ENCODE measurements at regions of chr16 and their contacts with region 1.

Region 1: GRCh38 chr16:29926005-29926710 is at the start of gene KCTD13:
- DNase-seq: peak; percentile 91
- H3K4me3 ChIP-seq: peak within 1 kb of the TSS; percentile 66 to 99 (median 92)
- H3K27ac ChIP-seq: peak within 1 kb of the TSS; percentile 85 to 91 (median 86)
- H3K4me1 ChIP-seq: peaks cover 0 to 27% (median 22%) of the 10 kb centered on the region in 4 donors
- H3K27me3 ChIP-seq: no peaks in the 10 kb centered on the region
- CTCF ChIP-seq: no peak
- EP300 ChIP-seq: no peak
- POLR2A ChIP-seq: peak; percentile 81 to 94
- total RNA-seq, gene KCTD13: 9.8 to 20.5 (median 14.1) TPM

Region 2: DNA sequence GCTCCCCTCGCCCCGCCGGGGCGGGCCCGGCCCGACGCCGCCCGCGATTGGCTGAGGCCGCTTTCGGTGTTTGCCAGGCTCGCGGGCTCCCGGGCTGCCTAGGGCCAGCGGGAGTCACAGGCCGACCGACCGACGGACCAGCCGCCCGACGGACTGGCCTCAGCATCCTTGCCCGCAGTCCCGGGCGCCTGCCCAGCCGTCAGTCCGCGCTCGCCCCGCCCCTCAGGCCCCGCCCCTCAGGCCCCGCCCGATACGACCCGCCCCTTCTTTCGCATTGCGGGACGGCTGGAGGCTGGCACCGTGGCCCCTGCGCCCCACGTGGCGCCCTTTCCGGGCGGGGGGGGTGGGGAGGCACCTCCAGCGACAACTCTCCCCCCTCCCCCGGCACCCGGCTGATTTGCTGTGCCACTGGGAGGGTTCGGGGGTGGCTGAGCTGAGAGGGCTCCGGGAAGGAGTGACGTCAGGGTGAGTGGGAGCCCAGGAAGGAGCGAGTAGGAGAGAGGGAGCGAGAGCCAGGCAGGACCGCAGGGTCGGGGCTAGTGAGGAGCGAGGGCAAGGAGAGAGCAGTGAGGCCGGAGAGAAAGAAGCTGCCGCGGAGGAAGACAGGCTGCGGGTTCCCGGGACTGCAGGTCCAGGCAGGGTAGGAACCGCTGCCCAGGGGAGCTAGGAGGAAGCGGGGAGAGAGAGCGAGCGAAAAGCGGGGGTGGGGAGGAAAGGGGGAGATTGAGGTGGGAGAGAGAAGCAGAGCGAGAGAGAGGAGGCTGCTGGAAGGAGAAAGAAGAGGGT is 25.9 kb before region 1 on chr16 and contains the start of gene ASPHD1:
- intact Hi-C with region 1: loop called (anchors 2 kb)
- DNase-seq: peak; percentile 77
- H3K4me3 ChIP-seq: peak within 1 kb of the TSS; percentile 24 to 56 (median 50)
- H3K27ac ChIP-seq: no peak within 1 kb of the TSS
- H3K4me1 ChIP-seq: peaks cover 0 to 20% (median 13%) of the 10 kb centered on the region in 4 donors
- H3K27me3 ChIP-seq: peaks cover 12 to 40% (median 26%) of the 10 kb centered on the region in 3 donors
- CTCF ChIP-seq: no peak
- EP300 ChIP-seq: no peak
- POLR2A ChIP-seq: no peak
- total RNA-seq, gene ASPHD1: 0.95 to 2.2 (median 2.1) TPM in 3 of 4 donors, not detected in the other

Region 3: DNA sequence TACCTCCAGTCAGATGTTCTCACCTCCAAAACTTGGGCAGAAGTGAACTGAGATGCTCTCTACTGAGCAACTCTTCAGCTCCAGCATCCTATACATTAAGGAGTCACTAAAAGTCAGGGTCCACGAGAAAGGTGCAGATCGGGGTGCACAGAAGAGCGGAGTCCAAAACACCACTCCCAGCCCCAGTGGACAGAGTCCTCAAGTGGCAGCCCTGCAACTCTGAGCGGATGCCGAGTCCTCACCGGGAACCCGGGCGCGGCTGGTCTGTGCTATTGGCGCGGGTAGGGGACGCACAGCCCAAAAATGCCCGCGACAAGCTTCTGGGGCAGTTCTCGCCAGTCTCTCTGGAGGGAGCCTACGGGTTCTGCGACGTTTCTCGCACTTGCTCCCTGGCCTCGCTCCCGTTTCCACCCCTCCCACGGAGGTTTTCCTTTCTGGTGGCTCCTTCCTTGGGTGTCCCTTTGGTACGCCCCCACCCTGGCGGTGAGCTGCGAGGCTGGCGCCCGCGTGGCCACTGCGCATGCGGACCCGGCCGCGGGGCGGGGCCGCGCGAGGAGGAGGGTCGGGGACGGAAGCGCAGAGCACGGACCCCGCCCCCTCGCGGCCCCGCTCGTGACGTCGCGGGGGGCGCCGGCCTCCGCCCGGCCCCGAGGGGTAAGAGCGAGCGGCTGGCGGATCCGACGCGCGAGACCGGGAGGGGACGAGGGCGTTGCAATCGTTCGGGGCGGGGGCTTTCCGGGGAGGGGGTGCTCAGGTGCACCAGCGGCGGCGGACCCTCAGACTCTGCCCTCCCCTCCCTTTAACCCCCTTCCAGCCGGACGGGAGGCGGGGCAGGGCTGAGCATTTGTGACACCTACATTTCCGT is 35.6 kb after region 1 on chr16 and contains the start of gene TMEM219:
- intact Hi-C with region 1: loop called (anchors 2 kb)
- DNase-seq: peak; percentile 96
- H3K4me3 ChIP-seq: peak within 1 kb of the TSS; percentile 64 to 91 (median 80)
- H3K27ac ChIP-seq: peak within 1 kb of the TSS; percentile 90 to 96 (median 94)
- H3K4me1 ChIP-seq: peaks cover 0 to 18% (median 17%) of the 10 kb centered on the region in 4 donors
- H3K27me3 ChIP-seq: no peaks in the 10 kb centered on the region
- CTCF ChIP-seq: peak; percentile 57 to 78 (median 68)
- EP300 ChIP-seq: no peak
- POLR2A ChIP-seq: peak; percentile 33 to 58
- total RNA-seq, gene TMEM219: 103 to 136 (median 112) TPM

Region 4: DNA sequence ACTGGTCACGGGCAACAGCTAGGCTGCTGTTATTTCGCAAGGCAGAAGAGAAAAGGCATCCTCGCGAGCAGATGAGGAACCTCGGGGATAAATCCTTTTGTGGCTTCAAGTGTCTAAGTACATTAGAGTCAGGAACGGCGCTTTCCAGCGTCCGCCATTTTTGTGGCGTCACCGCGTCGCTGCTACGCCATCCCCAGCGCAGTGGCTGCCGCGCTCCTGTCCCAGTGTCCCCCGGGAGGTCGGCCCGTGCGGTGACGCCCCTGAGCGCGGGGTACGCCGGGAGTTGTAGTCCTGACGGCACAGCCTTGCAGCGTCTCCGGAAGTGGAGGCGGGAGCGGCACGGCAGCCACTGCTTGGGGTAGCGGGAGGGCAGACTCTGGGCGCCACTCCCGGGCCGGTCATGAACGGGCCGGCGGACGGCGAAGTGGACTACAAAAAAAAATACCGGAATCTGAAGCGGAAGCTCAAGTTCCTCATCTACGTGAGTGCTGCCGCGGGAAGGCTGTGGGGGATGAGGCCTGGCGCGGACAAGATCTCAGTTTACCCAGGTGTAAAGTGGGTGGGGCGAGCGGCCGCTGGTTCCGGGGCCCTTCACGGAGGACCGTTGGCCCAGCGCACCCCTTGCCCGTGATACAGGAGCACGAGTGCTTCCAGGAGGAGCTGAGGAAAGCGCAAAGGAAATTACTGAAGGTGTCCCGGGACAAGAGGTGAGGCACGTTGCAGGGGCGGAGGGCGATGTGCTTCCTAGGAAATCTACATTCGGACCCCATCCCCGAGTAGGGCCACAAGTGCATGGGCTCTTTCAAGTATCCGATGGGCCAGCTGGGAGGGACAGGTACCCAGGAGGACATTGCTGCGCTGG is 70.0 kb after region 1 on chr16 and contains the start of gene INO80E:
- intact Hi-C with region 1: loop called (anchors 5 kb)
- DNase-seq: peak; percentile 99
- H3K4me3 ChIP-seq: peak within 1 kb of the TSS; percentile 74 to 96 (median 80)
- H3K27ac ChIP-seq: peak within 1 kb of the TSS; percentile 95 to 98 (median 95)
- H3K4me1 ChIP-seq: peaks cover 0 to 34% (median 25%) of the 10 kb centered on the region in 4 donors
- H3K27me3 ChIP-seq: no peaks in the 10 kb centered on the region
- CTCF ChIP-seq: no peak
- EP300 ChIP-seq: peak in 1 of 4 donors; percentile 28
- POLR2A ChIP-seq: peak; percentile 8 to 28
- total RNA-seq, gene INO80E: 49.2 to 174 (median 54.7) TPM